B cell (primary cell): ENCODE measurements at regions of chr2 and their contacts with region 1.

Region 1: GRCh38 chr2:96208143-96209010 is at the start of gene STARD7:
- DNase-seq: peak; percentile 97
- ATAC-seq: peak; percentile 86
- H3K4me3 ChIP-seq: peak within 1 kb of the TSS; percentile 84 to 91 (median 89)
- H3K4me3 Mint-ChIP-seq: peak within 1 kb of the TSS; percentile 95
- H3K27ac ChIP-seq: peak within 1 kb of the TSS; percentile 75 to 79
- H3K27ac Mint-ChIP-seq: peak within 1 kb of the TSS; percentile 91
- H3K4me1 ChIP-seq: peaks cover 46 to 65% of the 10 kb centered on the region in 2 donors
- H3K4me1 Mint-ChIP-seq: peaks cover 63% of the 10 kb centered on the region
- H3K27me3 ChIP-seq: no peaks in the 10 kb centered on the region
- H3K27me3 Mint-ChIP-seq: no peaks in the 10 kb centered on the region
- CTCF ChIP-seq: no peak
- total RNA-seq, gene STARD7: 132 and 133 TPM in 2 replicates

Region 2: DNA sequence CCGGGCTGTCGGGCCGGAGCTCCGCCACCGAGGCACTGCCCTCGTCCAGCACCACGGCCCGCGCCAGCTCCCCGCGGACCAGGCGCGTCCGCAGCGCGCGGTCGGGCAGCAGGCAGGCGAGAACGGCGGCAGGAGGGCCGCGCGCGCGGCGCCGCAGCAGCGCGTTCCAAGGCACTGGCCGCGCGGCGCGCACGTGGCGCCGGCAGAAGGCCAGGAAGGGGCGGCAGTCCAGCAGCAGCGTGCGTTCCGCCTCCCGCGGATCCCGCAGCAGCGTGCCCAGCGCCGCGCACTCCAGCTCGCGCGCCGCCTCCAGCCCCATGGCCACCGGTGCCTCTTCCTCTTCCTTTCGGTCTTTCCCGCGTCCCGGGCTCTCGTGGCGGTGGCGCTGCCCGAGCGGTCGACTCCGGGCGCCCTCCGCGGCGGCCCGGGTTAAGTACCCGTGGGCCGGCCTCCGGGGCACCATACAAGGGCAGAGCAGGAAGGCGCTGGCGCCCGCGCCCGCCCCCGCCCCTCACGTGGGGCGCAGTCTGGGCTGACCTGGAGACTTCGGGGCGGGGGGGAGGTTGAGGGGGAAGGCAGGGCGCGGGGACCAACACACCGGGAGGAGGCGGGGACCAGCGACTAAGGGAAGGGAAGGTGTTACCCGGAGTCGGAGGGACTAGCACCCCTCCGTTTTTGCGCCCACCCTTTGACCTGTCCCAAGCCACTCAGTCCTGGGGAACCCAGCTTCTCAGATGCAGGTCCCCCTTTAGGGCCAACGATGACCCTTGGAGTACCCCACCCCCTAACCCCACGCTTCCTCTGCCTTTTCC is 63.1 kb before region 1 on chr2 and contains the start of gene DUSP2:
- CTCF ChIA-PET with region 1: interaction called, 4 read pairs
- POLR2A ChIA-PET with region 1: interaction called, 12 read pairs
- intact Hi-C with region 1: loop called (anchors 1 kb)
- DNase-seq: peak; percentile 95
- ATAC-seq: peak; percentile 56
- H3K4me3 ChIP-seq: peak within 1 kb of the TSS; percentile 42 to 71 (median 59)
- H3K4me3 Mint-ChIP-seq: peak within 1 kb of the TSS; percentile 92
- H3K27ac ChIP-seq: peak within 1 kb of the TSS; percentile 95 to 97
- H3K27ac Mint-ChIP-seq: peak within 1 kb of the TSS; percentile 98
- H3K4me1 ChIP-seq: peaks cover 53 to 66% of the 10 kb centered on the region in 2 donors
- H3K4me1 Mint-ChIP-seq: peaks cover 69% of the 10 kb centered on the region
- H3K27me3 ChIP-seq: no peaks in the 10 kb centered on the region
- H3K27me3 Mint-ChIP-seq: no peaks in the 10 kb centered on the region
- CTCF ChIP-seq: no peak
- total RNA-seq, gene DUSP2: 69.8 and 74.9 TPM in 2 replicates

Region 3: GRCh38 chr2:96233880-96234316 is 25.5 kb after region 1 on chr2:
- CTCF ChIA-PET with region 1: interaction called, 20 read pairs
- POLR2A ChIA-PET with region 1: interaction called, 12 read pairs
- intact Hi-C with region 1: no loop called
- DNase-seq: peak; percentile 70
- ATAC-seq: peak; percentile 98
- H3K4me3 ChIP-seq: no peak overlapping the region
- H3K4me3 Mint-ChIP-seq: peak overlapping the region; percentile 49
- H3K27ac ChIP-seq: no peak overlapping the region
- H3K27ac Mint-ChIP-seq: peak overlapping the region; percentile 88
- H3K4me1 ChIP-seq: peaks cover 15% of the 10 kb centered on the region in 2 donors
- H3K4me1 Mint-ChIP-seq: peaks cover 16% of the 10 kb centered on the region
- H3K27me3 ChIP-seq: no peaks in the 10 kb centered on the region
- H3K27me3 Mint-ChIP-seq: no peaks in the 10 kb centered on the region
- CTCF ChIP-seq: peak; percentile 41

Region 4: GRCh38 chr2:96260404-96261260 is 52.3 kb after region 1 on chr2:
- CTCF ChIA-PET with region 1: interaction called, 23 read pairs
- POLR2A ChIA-PET with region 1: interaction called, 14 read pairs
- intact Hi-C with region 1: no loop called
- DNase-seq: peak; percentile 62
- ATAC-seq: peak; percentile 55
- H3K4me3 ChIP-seq: no peak overlapping the region
- H3K4me3 Mint-ChIP-seq: peak overlapping the region; percentile 64
- H3K27ac ChIP-seq: peak overlapping the region; percentile 44 to 64
- H3K27ac Mint-ChIP-seq: peak overlapping the region; percentile 92
- H3K4me1 ChIP-seq: peaks cover 65 to 75% of the 10 kb centered on the region in 2 donors
- H3K4me1 Mint-ChIP-seq: peaks cover 78% of the 10 kb centered on the region
- H3K27me3 ChIP-seq: no peaks in the 10 kb centered on the region
- H3K27me3 Mint-ChIP-seq: no peaks in the 10 kb centered on the region
- CTCF ChIP-seq: peak; percentile 29

Region 5: DNA sequence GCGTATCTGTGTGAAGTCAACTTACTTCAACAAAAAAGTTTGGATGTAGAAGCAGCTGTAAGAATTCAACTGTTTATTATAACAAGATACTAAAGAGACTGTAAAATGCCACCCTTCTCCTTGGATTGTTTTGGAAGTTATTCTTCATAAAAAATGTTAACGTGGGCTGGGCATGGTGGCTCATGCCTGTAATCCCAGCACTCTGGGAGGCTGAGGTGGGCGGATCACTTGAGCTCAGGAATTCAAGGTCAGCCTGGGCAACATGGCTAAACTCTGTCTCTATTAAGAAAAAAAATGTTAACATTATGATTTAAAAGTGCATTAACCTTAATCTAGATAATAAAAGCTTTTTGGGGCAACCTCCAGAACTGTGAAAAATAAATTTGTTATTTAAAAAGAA is 65.4 kb after region 1 on chr2:
- CTCF ChIA-PET with region 1: no interaction called
- POLR2A ChIA-PET with region 1: no interaction called
- intact Hi-C with region 1: no loop called
- DNase-seq: no peak
- ATAC-seq: no peak
- H3K4me3 ChIP-seq: no peak overlapping the region
- H3K4me3 Mint-ChIP-seq: no peak overlapping the region
- H3K27ac ChIP-seq: no peak overlapping the region
- H3K27ac Mint-ChIP-seq: no peak overlapping the region
- H3K4me1 ChIP-seq: no peaks in the 10 kb centered on the region
- H3K4me1 Mint-ChIP-seq: no peaks in the 10 kb centered on the region
- H3K27me3 ChIP-seq: no peaks in the 10 kb centered on the region
- H3K27me3 Mint-ChIP-seq: no peaks in the 10 kb centered on the region
- CTCF ChIP-seq: no peak

Region 6: DNA sequence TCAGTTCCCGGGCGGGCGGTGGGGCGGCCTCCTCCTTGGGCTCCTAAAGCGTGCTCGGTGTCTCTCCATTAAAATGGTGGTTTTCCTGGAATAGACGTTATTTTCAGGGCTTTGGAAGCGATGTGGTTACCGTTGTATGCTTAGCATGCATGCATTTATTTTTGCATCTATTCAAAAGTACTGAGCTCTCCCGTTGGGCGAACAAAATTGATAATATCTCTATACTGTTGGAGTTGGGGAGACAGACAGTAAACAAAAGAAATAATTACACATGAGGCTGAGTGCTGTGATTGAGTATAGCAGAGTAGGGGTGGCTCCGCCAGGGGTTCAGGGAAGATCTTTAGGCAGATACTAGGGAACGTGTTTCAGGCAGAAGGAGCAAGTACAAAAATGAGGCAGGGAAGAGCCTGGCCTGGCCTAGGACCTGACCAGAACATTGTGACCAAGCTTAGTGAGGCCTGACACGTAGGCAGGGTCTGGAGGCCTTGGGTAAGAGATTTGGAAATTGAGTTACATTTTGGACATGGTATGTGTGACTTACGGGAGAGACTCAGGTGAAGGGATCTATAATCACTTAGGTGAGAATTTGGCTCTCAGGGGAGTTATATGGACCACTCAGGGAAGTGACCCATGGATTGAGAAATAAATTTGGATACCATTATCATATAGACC is 127.9 kb after region 1 on chr2:
- CTCF ChIA-PET with region 1: no interaction called
- POLR2A ChIA-PET with region 1: no interaction called
- intact Hi-C with region 1: loop called (anchors 2 kb)
- DNase-seq: no peak
- ATAC-seq: no peak
- H3K4me3 ChIP-seq: peak overlapping the region; percentile 15 to 78 (median 61)
- H3K4me3 Mint-ChIP-seq: peak overlapping the region; percentile 71
- H3K27ac ChIP-seq: peak overlapping the region in 1 of 2 donors; percentile 92
- H3K27ac Mint-ChIP-seq: peak overlapping the region; percentile 69
- H3K4me1 ChIP-seq: peaks cover 14 to 22% of the 10 kb centered on the region in 2 donors
- H3K4me1 Mint-ChIP-seq: peaks cover 33% of the 10 kb centered on the region
- H3K27me3 ChIP-seq: no peaks in the 10 kb centered on the region
- H3K27me3 Mint-ChIP-seq: no peaks in the 10 kb centered on the region
- CTCF ChIP-seq: no peak

Region 7: GRCh38 chr2:96536445-96537065 is 328.2 kb after region 1 on chr2 and contains the start of gene ARID5A:
- CTCF ChIA-PET with region 1: no interaction called
- POLR2A ChIA-PET with region 1: no interaction called
- intact Hi-C with region 1: loop called (anchors 2 kb)
- DNase-seq: peak; percentile 92
- ATAC-seq: peak; percentile 71
- H3K4me3 ChIP-seq: peak within 1 kb of the TSS; percentile 28 to 85 (median 76)
- H3K4me3 Mint-ChIP-seq: peak within 1 kb of the TSS; percentile 83
- H3K27ac ChIP-seq: peak within 1 kb of the TSS; percentile 81 to 94
- H3K27ac Mint-ChIP-seq: peak within 1 kb of the TSS; percentile 97
- H3K4me1 ChIP-seq: peaks cover 38 to 55% of the 10 kb centered on the region in 2 donors
- H3K4me1 Mint-ChIP-seq: peaks cover 44% of the 10 kb centered on the region
- H3K27me3 ChIP-seq: no peaks in the 10 kb centered on the region
- H3K27me3 Mint-ChIP-seq: no peaks in the 10 kb centered on the region
- CTCF ChIP-seq: peak; percentile 45
- total RNA-seq, gene ARID5A: 93.0 and 100 TPM in 2 replicates